ENCODE measurements at regions of chr3 and their contacts with region 1.

Region 1: DNA sequence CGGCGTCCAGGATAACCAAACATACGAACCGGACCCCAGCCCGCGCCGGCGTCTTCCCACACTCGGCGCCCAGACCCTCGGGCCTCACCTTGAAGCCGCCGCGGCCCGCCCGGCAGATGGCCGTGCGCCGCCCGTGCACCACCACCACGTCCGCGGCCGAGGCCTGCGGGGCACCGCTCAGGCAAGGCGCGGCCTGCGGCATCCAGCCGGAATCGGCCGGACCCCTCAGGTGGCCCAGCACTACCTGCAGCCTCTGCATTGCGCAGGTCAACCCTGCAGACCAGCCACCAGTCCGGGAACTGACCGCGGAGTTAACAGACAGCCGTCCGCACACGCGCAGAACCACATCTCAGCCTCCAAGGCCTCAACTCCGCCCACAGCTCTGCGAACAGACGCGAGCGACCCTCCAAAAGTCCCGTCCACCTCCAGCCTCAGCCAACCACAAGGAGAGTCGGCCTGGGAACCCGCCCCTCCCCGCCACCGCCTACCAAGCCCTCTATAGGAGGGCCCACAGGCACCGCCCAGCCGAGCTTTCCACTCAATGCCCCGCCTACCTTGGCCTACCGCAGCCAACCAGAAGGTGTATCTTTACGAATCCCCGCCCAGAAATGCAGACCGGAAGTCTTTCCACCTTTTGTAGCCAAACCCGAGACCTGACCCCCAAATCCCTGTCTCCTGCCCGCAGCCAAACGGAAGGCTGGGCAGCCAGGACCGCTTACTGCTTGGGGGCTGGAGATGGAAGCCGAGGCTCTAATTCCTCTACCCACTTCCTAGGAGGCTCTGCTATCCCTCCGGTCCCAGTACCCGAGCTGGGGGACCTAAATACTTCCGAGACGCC is at the start of gene ACAA1:
- DNase-seq: peak; percentile 99
- H3K4me3 ChIP-seq: peak within 1 kb of the TSS; percentile 55 to 86 (median 84)
- H3K27ac ChIP-seq: peak within 1 kb of the TSS; percentile 71
- H3K4me1 ChIP-seq: peaks cover 47% of the 10 kb centered on the region
- H3K27me3 ChIP-seq: no peaks in the 10 kb centered on the region
- CTCF ChIP-seq: peak in 1 of 2 donors; percentile 1
- total RNA-seq, gene ACAA1: 24.8 to 62.4 TPM

Region 2: GRCh38 chr3:36973774-36974173 is 1163.2 kb before region 1 on chr3:
- CTCF ChIA-PET with region 1: no interaction called
- dilution Hi-C with region 1: no loop called
- in situ Hi-C with region 1: no loop called
- intact Hi-C with region 1: no loop called
- DNase-seq: no peak
- H3K4me3 ChIP-seq: no peak overlapping the region
- H3K27ac ChIP-seq: no peak overlapping the region
- H3K4me1 ChIP-seq: peaks cover 10% of the 10 kb centered on the region
- H3K27me3 ChIP-seq: no peaks in the 10 kb centered on the region
- CTCF ChIP-seq: no peak

Region 3: DNA sequence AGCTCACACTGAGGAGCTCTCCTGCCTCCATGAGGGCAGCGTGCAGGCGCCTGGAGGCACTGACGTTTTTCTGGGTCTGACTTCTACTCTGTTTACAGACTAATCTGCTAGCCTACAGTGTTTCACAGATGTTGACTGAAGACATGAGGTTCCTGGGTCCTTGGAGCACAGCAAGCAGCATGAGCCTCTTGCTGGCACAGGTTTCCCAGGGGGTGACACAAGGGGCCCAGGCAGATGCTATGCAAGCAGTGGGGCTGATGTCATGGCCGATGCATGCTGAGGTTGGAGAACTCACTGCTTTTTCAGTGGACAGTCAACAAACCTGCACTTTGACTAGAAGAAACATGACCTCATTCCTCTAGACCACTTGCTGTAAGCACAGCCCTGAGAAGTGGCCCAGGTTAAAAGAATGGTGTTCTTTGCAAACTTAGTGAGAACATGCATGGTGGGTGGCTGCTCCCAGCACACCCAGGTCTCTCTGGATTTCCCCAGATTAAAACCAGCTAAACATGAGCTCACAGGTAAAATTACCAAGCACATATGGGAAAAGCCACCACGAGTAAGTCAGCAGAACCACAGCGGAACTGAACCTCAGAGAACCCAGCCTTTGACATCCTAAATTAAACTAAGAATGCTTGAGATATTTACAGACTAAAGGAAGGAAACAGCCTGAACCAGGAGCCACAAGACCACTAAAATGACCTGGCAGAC is 82.5 kb before region 1 on chr3:
- CTCF ChIA-PET with region 1: no interaction called
- dilution Hi-C with region 1: no loop called
- in situ Hi-C with region 1: no loop called
- intact Hi-C with region 1: no loop called
- DNase-seq: no peak
- H3K4me3 ChIP-seq: no peak overlapping the region
- H3K27ac ChIP-seq: no peak overlapping the region
- H3K4me1 ChIP-seq: peaks cover 4% of the 10 kb centered on the region
- H3K27me3 ChIP-seq: peaks cover 2% of the 10 kb centered on the region
- CTCF ChIP-seq: no peak

Region 4: GRCh38 chr3:38154033-38154494 is 17.1 kb after region 1 on chr3:
- CTCF ChIA-PET with region 1: no interaction called
- dilution Hi-C with region 1: no loop called
- in situ Hi-C with region 1: no loop called
- intact Hi-C with region 1: loop called (anchors 1 kb)
- DNase-seq: peak; percentile 94
- H3K4me3 ChIP-seq: no peak overlapping the region
- H3K27ac ChIP-seq: peak overlapping the region; percentile 93
- H3K4me1 ChIP-seq: peaks cover 58% of the 10 kb centered on the region
- H3K27me3 ChIP-seq: no peaks in the 10 kb centered on the region
- CTCF ChIP-seq: no peak

Region 5: DNA sequence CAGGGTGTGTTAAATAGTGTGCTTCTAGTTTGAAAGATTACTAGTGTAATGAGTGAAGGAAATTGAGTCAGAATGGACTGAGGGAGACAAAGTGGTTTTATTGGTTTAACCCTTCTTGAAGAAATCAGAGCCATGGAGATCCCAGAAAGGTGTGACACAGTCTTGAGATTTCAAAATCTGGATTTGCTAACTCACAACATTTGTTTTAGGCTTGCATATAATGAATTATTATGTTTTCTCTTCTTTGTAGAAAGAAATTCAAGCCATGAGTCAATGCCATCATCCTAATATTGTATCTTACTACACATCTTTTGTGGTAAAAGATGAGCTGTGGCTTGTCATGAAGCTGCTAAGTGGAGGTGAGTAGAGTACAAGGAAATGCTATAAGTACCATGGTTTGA is 53.5 kb after region 1 on chr3:
- CTCF ChIA-PET with region 1: no interaction called
- dilution Hi-C with region 1: no loop called
- in situ Hi-C with region 1: no loop called
- intact Hi-C with region 1: loop called (anchors 1 kb)
- DNase-seq: peak; percentile 89
- H3K4me3 ChIP-seq: no peak overlapping the region
- H3K27ac ChIP-seq: peak overlapping the region; percentile 11
- H3K4me1 ChIP-seq: peaks cover 28% of the 10 kb centered on the region
- H3K27me3 ChIP-seq: no peaks in the 10 kb centered on the region
- CTCF ChIP-seq: no peak

Region 6: GRCh38 chr3:38247366-38248035 is 110.5 kb after region 1 on chr3:
- CTCF ChIA-PET with region 1: no interaction called
- dilution Hi-C with region 1: no loop called
- in situ Hi-C with region 1: no loop called
- intact Hi-C with region 1: loop called (anchors 1 kb)
- DNase-seq: peak; percentile 91
- H3K4me3 ChIP-seq: no peak overlapping the region
- H3K27ac ChIP-seq: peak overlapping the region; percentile 53
- H3K4me1 ChIP-seq: peaks cover 12% of the 10 kb centered on the region
- H3K27me3 ChIP-seq: no peaks in the 10 kb centered on the region
- CTCF ChIP-seq: peak; percentile 31 to 55

Region 7: GRCh38 chr3:38496131-38496910 is 359.3 kb after region 1 on chr3 and contains the start of gene EXOG:
- CTCF ChIA-PET with region 1: no interaction called
- dilution Hi-C with region 1: no loop called
- in situ Hi-C with region 1: loop called in 1 of 2 experiments (anchors 25 kb)
- intact Hi-C with region 1: no loop called
- DNase-seq: peak; percentile 85
- H3K4me3 ChIP-seq: peak within 1 kb of the TSS; percentile 79 to 89 (median 81)
- H3K27ac ChIP-seq: peak within 1 kb of the TSS; percentile 63
- H3K4me1 ChIP-seq: no peaks in the 10 kb centered on the region
- H3K27me3 ChIP-seq: no peaks in the 10 kb centered on the region
- CTCF ChIP-seq: peak; percentile 49 to 90
- total RNA-seq, gene EXOG: 8.0 to 19.9 TPM

Measured in mammary epithelial cell (primary cell).